ENCODE measurements at regions of chr12 and their contacts with region 1.

Region 1: GRCh38 chr12:52879394-52880351 is 25.2 kb downstream of the KRT8 start:
- DNase-seq: peak in 1 of 2 experiments; percentile 86
- H3K4me3 ChIP-seq: peak overlapping the region in 3 of 4 experiments; percentile 29 to 59 (median 42); a peak in 6 of 8 replicates
- H3K27ac ChIP-seq: no peak overlapping the region
- H3K4me1 ChIP-seq: peaks cover 0 to 8% (median 4%) of the 10 kb centered on the region in 4 experiments; a peak in 4 of 7 replicates
- H3K27me3 ChIP-seq: peaks cover 0 to 10% (median 5%) of the 10 kb centered on the region in 4 experiments; a peak in 3 of 7 replicates
- CTCF ChIP-seq: peak; percentile 80 to 98 (median 98)
- EP300 ChIP-seq: no peak
- POLR2A ChIP-seq: no peak
- RAD21 ChIP-seq: peak; percentile 96

Region 2: DNA sequence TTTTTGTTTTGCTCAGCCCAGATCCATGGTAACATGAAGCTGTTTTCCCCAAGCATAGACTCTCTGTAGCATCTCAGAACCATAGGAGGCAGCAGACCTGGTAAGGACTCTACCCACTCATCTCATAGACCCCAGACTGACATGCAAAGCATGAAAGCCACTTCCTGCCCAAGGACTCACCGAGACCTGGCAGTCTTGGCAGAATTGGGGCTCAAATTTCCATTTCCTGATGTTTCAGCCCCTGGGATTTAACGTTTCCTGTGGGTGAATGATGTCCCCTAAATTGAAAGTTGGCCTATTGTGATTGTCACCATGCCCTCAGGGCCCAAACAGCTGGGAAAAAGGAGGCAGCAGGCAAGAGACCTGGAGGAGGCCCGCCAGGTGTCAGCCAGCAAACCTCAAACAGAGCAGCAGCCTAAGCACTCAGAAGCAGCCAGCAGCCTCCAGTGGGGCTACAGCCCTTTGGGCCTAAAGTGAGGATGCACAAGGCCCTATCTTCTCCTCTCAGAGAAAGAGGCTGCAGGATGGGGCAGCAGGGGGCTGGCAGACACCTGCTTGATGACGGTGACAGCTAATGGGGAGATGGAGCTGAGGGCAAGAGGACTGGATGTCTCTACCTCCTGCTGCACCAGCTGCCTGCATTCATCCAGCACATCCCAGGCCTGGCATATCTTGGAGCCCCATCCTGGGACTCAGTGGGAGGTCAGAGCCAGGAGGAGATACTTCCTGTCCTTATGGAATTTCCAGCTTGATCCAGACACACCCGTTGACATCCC is 520.9 kb before region 1 on chr12:
- CTCF ChIA-PET with region 1: interaction called, 19 read pairs
- POLR2A ChIA-PET with region 1: no interaction called
- DNase-seq: no peak
- H3K4me3 ChIP-seq: no peak overlapping the region
- H3K27ac ChIP-seq: no peak overlapping the region
- H3K4me1 ChIP-seq: no peaks in the 10 kb centered on the region
- H3K27me3 ChIP-seq: no peaks in the 10 kb centered on the region
- CTCF ChIP-seq: no peak
- EP300 ChIP-seq: no peak
- POLR2A ChIP-seq: no peak
- RAD21 ChIP-seq: no peak

Region 3: GRCh38 chr12:52667511-52667910 is 212.2 kb before region 1 on chr12:
- CTCF ChIA-PET with region 1: interaction called, 26 read pairs
- POLR2A ChIA-PET with region 1: no interaction called
- DNase-seq: no peak
- H3K4me3 ChIP-seq: no peak overlapping the region
- H3K27ac ChIP-seq: no peak overlapping the region
- H3K4me1 ChIP-seq: no peaks in the 10 kb centered on the region
- H3K27me3 ChIP-seq: no peaks in the 10 kb centered on the region; a peak in 1 of 7 replicates
- CTCF ChIP-seq: peak; percentile 28 to 64 (median 63)
- EP300 ChIP-seq: no peak
- POLR2A ChIP-seq: no peak
- RAD21 ChIP-seq: peak; percentile 79 to 80

Region 4: DNA sequence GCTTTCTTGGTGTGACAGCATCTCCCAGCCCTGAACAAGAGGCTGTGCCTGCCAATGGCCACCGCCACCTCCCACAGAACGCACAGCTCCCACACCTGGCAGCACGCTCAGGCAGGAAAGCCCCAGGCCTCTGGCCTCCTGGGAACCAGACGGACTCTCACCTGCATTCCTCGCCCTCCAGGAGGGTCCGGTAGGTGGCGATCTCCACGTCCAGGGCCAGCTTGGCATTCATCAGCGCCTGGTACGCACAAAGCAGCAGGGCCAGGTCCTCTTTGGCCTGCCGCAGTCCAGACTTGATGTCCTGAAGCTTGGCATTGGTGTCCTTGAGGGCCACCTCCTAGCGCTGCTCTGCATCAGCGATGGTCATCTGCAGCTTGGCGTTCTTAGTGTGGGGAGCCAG is 164.3 kb before region 1 on chr12:
- CTCF ChIA-PET with region 1: interaction called, 19 read pairs
- POLR2A ChIA-PET with region 1: no interaction called
- DNase-seq: peak in 1 of 2 experiments; percentile 78
- H3K4me3 ChIP-seq: no peak overlapping the region
- H3K27ac ChIP-seq: no peak overlapping the region
- H3K4me1 ChIP-seq: peaks cover 0 to 7% (median 0%) of the 10 kb centered on the region in 4 experiments; a peak in 3 of 7 replicates
- H3K27me3 ChIP-seq: peaks cover 8 to 32% (median 26%) of the 10 kb centered on the region in 4 experiments
- CTCF ChIP-seq: peak; percentile 66 to 74 (median 71)
- EP300 ChIP-seq: no peak
- POLR2A ChIP-seq: no peak
- RAD21 ChIP-seq: peak; percentile 44 to 67

Region 5: GRCh38 chr12:52924764-52925716 is 45.4 kb after region 1 on chr12:
- CTCF ChIA-PET with region 1: interaction called, 43 read pairs
- POLR2A ChIA-PET with region 1: interaction called, 3 read pairs
- DNase-seq: no peak
- H3K4me3 ChIP-seq: no peak overlapping the region
- H3K27ac ChIP-seq: no peak overlapping the region
- H3K4me1 ChIP-seq: peaks cover 0 to 24% (median 9%) of the 10 kb centered on the region in 4 experiments; a peak in 6 of 7 replicates
- H3K27me3 ChIP-seq: no peaks in the 10 kb centered on the region
- CTCF ChIP-seq: no peak
- EP300 ChIP-seq: no peak
- POLR2A ChIP-seq: no peak
- RAD21 ChIP-seq: no peak

Region 6: DNA sequence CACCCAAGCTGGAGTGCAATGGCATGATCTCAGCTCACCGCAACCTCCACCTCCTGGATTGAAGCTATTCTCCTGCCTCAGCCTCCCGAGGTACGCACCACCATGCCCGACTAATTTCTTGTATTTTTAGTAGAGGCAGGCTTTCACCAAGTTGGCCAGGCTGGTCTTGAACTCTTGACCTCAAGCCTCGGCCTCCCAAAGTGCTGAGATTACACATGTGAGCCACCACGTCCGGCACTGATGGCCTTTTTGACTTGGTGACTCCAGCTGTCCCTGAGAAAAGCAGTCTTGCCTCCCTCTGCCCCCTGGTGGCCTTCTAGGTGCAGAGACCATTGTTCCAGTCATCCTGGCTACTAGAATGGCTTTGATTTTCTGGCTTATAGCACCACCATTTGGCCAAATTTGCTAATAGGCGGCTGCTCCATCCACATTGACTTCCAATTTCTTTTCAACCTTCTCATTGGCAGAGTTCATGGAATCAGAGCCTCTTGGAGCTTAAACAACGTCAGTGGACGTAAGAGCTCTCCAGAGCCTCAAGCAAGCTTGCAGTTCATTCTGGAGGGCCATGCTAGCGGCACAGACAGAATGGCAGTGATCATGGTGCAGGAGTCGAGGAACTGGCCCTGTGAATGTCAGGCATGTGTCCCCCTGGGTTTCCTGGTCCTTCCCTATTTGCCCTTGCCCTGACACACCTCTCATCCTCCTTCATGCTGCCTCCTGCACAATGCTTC is 101.2 kb after region 1 on chr12:
- CTCF ChIA-PET with region 1: interaction called, 1,250 read pairs
- POLR2A ChIA-PET with region 1: interaction called, 12 read pairs
- DNase-seq: peak; percentile 84 to 88
- H3K4me3 ChIP-seq: no peak overlapping the region
- H3K27ac ChIP-seq: no peak overlapping the region
- H3K4me1 ChIP-seq: peaks cover 0 to 10% (median 0%) of the 10 kb centered on the region in 4 experiments; a peak in 1 of 7 replicates
- H3K27me3 ChIP-seq: no peaks in the 10 kb centered on the region
- CTCF ChIP-seq: peak; percentile 92 to 100 (median 100)
- EP300 ChIP-seq: no peak
- POLR2A ChIP-seq: no peak
- RAD21 ChIP-seq: peak; percentile 100

Region 7: GRCh38 chr12:53074283-53074998 is 194.8 kb after region 1 on chr12:
- CTCF ChIA-PET with region 1: no interaction called
- POLR2A ChIA-PET with region 1: no interaction called
- DNase-seq: no peak
- H3K4me3 ChIP-seq: no peak overlapping the region
- H3K27ac ChIP-seq: no peak overlapping the region
- H3K4me1 ChIP-seq: peaks cover 3 to 13% (median 5%) of the 10 kb centered on the region in 4 experiments; a peak in 6 of 7 replicates
- H3K27me3 ChIP-seq: peaks cover 0 to 2% (median 0%) of the 10 kb centered on the region in 4 experiments; a peak in 1 of 7 replicates
- CTCF ChIP-seq: no peak
- EP300 ChIP-seq: no peak
- POLR2A ChIP-seq: no peak
- RAD21 ChIP-seq: no peak